ENCODE measurements at regions of chr6 and their contacts with region 1.

Region 1: GRCh38 chr6:90619221-90619620 is 32.3 kb upstream of the MAP3K7 start:
- DNase-seq: no peak
- H3K4me3 ChIP-seq: no peak overlapping the region
- H3K27ac ChIP-seq: no peak overlapping the region
- H3K4me1 ChIP-seq: no peaks in the 10 kb centered on the region
- H3K27me3 ChIP-seq: peaks cover 10% of the 10 kb centered on the region
- CTCF ChIP-seq: no peak

Region 2: DNA sequence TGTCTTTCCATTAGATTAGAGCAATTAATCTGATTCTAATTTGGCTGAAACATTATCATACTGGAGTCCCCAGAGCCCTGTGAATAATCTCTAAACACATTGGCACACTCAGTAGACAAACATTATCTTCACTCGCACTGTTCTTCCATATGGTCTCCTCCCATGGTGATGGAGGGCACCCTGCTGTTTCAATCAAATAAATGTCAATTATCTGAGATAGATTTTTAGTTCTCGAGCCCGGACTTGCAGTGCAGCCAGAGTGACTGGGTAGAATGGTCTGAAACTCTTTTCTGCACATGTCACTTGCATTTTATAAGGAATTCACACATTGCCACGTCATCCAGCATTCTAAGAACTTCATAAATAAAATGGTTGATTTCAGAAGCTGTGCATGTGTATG is 58.2 kb after region 1 on chr6:
- CTCF ChIA-PET with region 1: no interaction called
- dilution Hi-C with region 1: loop called (anchors 5 kb)
- in situ Hi-C with region 1: no loop called
- intact Hi-C with region 1: no loop called
- DNase-seq: no peak
- H3K4me3 ChIP-seq: no peak overlapping the region
- H3K27ac ChIP-seq: no peak overlapping the region
- H3K4me1 ChIP-seq: no peaks in the 10 kb centered on the region
- H3K27me3 ChIP-seq: no peaks in the 10 kb centered on the region
- CTCF ChIP-seq: no peak